ENCODE measurements at regions of chr10 and their contacts with region 1.

Region 1: DNA sequence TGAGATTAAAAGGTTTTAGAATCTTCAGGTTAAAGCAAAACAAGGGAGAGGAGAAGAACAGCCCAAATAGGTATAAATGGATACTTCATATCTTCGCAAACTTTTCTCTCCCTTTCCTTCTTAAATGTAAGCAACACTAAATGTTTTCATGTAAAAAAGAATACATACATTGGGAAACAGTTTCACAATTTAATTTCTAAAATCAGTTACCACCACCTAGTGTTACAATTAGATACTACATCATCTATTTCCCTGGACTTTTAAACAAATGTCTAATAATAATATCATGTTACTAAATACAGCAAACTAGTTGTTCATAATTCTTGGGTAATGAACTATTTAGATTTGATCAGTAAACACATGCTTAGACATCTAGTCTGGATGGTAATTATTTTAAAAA is 35.8 kb downstream of the MINDY3 start:
- DNase-seq: peak in 1 of 35 experiments; percentile 9
- ATAC-seq: no peak
- H3K4me3 ChIP-seq: no peak overlapping the region
- H3K4me3 Mint-ChIP-seq: no peak overlapping the region
- H3K27ac ChIP-seq: no peak overlapping the region
- H3K27ac Mint-ChIP-seq: no peak overlapping the region
- H3K4me1 ChIP-seq: no peaks in the 10 kb centered on the region
- H3K4me1 Mint-ChIP-seq: peaks cover 0 to 5% (median 4%) of the 10 kb centered on the region in 3 donors
- H3K27me3 ChIP-seq: no peaks in the 10 kb centered on the region
- H3K27me3 Mint-ChIP-seq: no peaks in the 10 kb centered on the region

Region 2: DNA sequence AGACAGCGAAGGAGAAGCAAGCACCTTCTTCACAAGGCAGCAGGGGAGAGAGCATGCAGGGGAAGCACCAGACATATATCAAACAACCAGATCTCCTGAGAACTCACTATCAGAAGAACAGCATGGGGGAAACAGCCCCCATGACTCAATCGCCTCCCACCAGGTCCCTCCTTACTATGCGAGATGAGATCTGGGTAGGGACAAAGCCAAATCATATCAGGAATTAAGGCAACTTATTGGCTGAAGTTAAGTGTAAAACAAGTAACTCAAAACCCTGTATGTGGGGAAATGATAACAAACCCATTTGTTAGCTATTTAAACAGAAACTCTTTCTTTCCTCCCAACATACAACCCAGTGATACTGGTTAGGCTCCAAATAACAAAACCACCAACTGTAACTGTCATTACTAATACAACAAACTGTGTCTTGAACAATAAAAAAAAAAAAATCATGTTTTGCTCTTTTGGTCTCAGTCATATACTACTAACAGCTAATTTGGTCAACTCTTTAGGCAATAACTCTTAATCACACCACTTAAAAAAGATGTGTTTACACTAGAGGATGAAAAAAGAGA is 22.0 kb before region 1 on chr10:
- CTCF ChIA-PET with region 1: no interaction called
- POLR2A ChIA-PET with region 1: no interaction called
- DNase-seq: no peak
- ATAC-seq: no peak
- H3K4me3 ChIP-seq: no peak overlapping the region
- H3K4me3 Mint-ChIP-seq: no peak overlapping the region
- H3K27ac ChIP-seq: no peak overlapping the region
- H3K27ac Mint-ChIP-seq: no peak overlapping the region
- H3K4me1 ChIP-seq: no peaks in the 10 kb centered on the region
- H3K4me1 Mint-ChIP-seq: peaks cover 0 to 6% (median 0%) of the 10 kb centered on the region in 3 donors
- H3K27me3 ChIP-seq: no peaks in the 10 kb centered on the region
- H3K27me3 Mint-ChIP-seq: no peaks in the 10 kb centered on the region

Region 3: DNA sequence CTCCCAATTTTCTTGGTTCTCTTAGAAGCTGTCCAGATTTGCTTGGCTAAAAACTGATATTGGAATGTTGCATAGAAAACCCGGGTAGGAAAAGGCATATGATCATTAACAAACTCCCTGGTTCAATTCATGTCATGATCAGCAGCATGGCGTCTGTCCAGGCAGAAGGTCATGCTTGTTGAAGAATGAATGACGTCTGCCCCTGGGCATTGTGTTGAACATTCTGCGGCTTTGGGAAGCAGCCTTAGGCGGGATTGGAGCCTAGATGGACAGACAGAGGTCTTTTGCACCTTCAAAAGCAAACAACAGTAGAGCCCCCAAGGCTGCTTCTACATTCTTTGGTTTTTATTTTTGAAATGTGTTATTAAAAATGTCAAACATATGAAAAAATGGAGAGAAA is 43.5 kb after region 1 on chr10:
- CTCF ChIA-PET with region 1: interaction called in 1 of 2 experiments, 11 read pairs
- POLR2A ChIA-PET with region 1: no interaction called
- DNase-seq: no peak
- ATAC-seq: no peak
- H3K4me3 ChIP-seq: no peak overlapping the region
- H3K4me3 Mint-ChIP-seq: no peak overlapping the region
- H3K27ac ChIP-seq: no peak overlapping the region
- H3K27ac Mint-ChIP-seq: no peak overlapping the region
- H3K4me1 ChIP-seq: no peaks in the 10 kb centered on the region
- H3K4me1 Mint-ChIP-seq: no peaks in the 10 kb centered on the region
- H3K27me3 ChIP-seq: peaks cover 8 to 9% of the 10 kb centered on the region in 2 experiments
- H3K27me3 Mint-ChIP-seq: peaks cover 71 to 72% of the 10 kb centered on the region in 2 donors

Region 4: DNA sequence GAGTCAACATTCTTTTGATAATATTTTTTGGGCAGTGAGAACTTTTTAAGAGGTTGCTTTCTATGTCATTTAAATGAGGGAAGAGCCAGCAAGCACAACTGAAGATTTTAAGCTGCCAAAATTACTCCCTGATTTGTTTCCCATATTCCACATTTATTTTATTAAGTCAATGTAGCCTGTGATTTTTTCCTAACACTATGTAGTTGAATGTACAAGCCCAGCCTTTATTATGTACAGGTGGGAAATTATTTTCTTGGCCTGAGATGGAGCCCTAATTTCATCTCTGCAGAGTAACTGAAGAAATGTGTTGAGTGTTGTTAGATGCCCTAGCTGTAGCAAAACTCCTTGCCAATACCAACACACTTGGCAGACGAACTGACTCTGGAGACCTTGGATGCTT is 118.9 kb after region 1 on chr10:
- CTCF ChIA-PET with region 1: no interaction called
- POLR2A ChIA-PET with region 1: no interaction called
- DNase-seq: no peak
- ATAC-seq: no peak
- H3K4me3 ChIP-seq: no peak overlapping the region
- H3K4me3 Mint-ChIP-seq: no peak overlapping the region
- H3K27ac ChIP-seq: no peak overlapping the region
- H3K27ac Mint-ChIP-seq: no peak overlapping the region
- H3K4me1 ChIP-seq: no peaks in the 10 kb centered on the region
- H3K4me1 Mint-ChIP-seq: no peaks in the 10 kb centered on the region
- H3K27me3 ChIP-seq: no peaks in the 10 kb centered on the region
- H3K27me3 Mint-ChIP-seq: peaks cover 34 to 36% of the 10 kb centered on the region in 2 donors

Region 5: DNA sequence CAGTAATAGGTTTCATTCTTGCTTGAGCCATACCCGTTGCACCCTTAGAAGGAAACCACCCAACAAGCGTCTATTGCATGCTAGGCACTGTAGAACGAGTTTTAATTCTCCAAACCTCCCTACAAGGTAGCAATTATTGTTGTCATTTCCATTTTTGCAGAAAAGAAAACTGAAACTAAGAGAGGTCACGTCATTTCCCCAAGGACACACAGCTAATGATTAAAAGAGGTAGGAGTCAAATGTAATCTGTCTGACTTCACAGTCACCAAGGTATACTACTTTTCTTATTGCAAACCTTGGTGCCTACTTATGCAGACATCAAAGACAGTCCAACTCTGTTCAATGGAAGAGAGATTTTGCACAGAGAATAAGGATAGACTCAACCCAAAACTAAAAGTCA is 746.2 kb after region 1 on chr10:
- CTCF ChIA-PET with region 1: no interaction called
- POLR2A ChIA-PET with region 1: no interaction called
- DNase-seq: no peak
- ATAC-seq: no peak
- H3K4me3 ChIP-seq: no peak overlapping the region
- H3K4me3 Mint-ChIP-seq: no peak overlapping the region
- H3K27ac ChIP-seq: no peak overlapping the region
- H3K27ac Mint-ChIP-seq: no peak overlapping the region
- H3K4me1 ChIP-seq: no peaks in the 10 kb centered on the region
- H3K4me1 Mint-ChIP-seq: peaks cover 0 to 8% (median 7%) of the 10 kb centered on the region in 3 donors
- H3K27me3 ChIP-seq: peaks cover 2 to 6% of the 10 kb centered on the region in 2 experiments
- H3K27me3 Mint-ChIP-seq: peaks cover 16 to 26% of the 10 kb centered on the region in 2 donors